ENCODE measurements at regions of chr14 and their contacts with region 1.

Region 1: DNA sequence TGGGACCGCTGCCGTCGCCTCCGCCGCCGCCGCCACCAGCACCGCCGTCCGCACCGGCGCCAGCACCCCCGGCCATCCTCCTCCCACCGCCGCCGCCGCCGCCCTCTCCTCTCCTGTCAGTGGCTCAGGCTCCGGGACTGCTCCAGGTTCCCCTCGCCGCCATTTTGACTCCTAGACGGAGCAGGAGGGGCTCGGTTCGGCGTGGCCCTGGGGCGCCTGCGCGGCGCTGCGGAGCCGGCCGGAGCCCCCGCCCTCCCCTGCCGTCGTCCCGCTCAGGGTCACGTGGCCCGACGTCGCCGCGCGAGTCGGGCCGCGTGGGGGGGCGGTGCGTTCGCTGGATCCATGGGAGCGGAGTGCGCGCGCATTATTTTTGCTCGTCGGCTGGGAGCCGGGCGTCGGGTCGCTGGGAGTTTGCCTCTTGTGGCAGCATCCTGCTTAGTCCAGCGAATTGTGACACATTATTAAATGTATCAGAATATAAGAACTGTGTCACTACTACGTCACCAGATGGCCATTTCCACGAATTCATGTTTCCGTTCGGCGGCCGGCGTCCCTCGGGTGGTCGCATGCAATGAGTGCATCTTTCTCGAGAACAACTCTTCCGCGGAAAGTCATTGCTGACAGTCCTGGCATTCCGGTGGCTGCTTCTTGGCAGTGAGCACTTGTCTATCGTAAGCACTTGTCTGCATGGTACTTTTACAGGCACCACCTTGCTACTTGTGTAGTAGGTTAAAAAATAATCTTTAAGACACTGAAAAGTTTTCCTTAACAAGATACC is at the start of gene BTBD7:
- DNase-seq: peak; percentile 96
- H3K4me3 Mint-ChIP-seq: peak within 1 kb of the TSS; percentile 76
- H3K27ac Mint-ChIP-seq: peak within 1 kb of the TSS; percentile 97
- H3K4me1 Mint-ChIP-seq: peaks cover 22% of the 10 kb centered on the region
- H3K27me3 Mint-ChIP-seq: no peaks in the 10 kb centered on the region
- CTCF ChIP-seq: no peak
- total RNA-seq, gene BTBD7: 39.3 and 42.0 TPM in 2 replicates

Region 2: GRCh38 chr14:93042968-93043940 is 289.8 kb before region 1 on chr14:
- CTCF ChIA-PET with region 1: no interaction called
- intact Hi-C with region 1: loop called (anchors 5 kb)
- DNase-seq: peak; percentile 96
- H3K4me3 Mint-ChIP-seq: peak overlapping the region; percentile 50
- H3K27ac Mint-ChIP-seq: peak overlapping the region; percentile 88
- H3K4me1 Mint-ChIP-seq: peaks cover 87% of the 10 kb centered on the region
- H3K27me3 Mint-ChIP-seq: no peaks in the 10 kb centered on the region
- CTCF ChIP-seq: no peak

Region 3: DNA sequence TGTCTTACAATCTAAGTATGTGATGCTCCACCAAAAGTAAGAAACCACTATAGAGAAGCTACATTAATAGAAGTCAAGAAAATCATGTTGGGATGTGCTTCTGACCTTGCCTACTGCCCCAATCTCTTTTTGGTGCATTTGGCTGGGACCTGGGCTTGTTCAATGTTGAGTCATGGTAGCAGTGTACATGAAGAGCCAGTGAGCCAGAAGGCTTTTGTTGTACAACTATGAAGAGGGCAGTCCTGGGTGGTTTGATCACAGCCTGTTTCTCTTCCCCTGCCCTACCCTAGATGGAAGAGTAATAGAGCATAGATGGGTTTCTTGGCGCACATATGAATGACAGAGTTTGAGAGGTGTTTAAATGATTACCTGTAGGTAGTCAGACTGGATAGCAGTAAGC is 69.6 kb before region 1 on chr14:
- CTCF ChIA-PET with region 1: no interaction called
- intact Hi-C with region 1: loop called (anchors 2 kb)
- DNase-seq: no peak
- H3K4me3 Mint-ChIP-seq: no peak overlapping the region
- H3K27ac Mint-ChIP-seq: no peak overlapping the region
- H3K4me1 Mint-ChIP-seq: peaks cover 37% of the 10 kb centered on the region
- H3K27me3 Mint-ChIP-seq: no peaks in the 10 kb centered on the region
- CTCF ChIP-seq: no peak

Region 4: DNA sequence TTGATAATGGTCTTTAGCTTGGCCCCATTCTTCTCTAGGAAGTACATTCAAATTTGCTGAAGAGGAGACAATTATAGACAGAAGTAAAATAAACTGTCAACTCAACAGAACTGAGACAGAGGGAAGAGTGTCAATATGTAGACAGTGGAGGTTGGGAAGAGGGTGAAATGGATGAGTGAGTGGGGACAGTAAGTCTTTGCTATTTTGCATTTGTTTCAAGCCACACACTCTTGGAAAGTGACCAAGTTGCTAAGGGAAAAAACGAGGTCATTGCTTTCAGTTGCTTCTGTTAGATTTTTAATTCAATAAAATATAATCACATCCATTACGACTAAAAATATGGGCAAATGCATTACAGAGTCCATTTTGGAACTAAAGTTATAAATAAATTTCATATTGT is 48.0 kb before region 1 on chr14:
- CTCF ChIA-PET with region 1: no interaction called
- intact Hi-C with region 1: loop called (anchors 5 kb)
- DNase-seq: no peak
- H3K4me3 Mint-ChIP-seq: no peak overlapping the region
- H3K27ac Mint-ChIP-seq: no peak overlapping the region
- H3K4me1 Mint-ChIP-seq: peaks cover 51% of the 10 kb centered on the region
- H3K27me3 Mint-ChIP-seq: no peaks in the 10 kb centered on the region
- CTCF ChIP-seq: no peak

Region 5: DNA sequence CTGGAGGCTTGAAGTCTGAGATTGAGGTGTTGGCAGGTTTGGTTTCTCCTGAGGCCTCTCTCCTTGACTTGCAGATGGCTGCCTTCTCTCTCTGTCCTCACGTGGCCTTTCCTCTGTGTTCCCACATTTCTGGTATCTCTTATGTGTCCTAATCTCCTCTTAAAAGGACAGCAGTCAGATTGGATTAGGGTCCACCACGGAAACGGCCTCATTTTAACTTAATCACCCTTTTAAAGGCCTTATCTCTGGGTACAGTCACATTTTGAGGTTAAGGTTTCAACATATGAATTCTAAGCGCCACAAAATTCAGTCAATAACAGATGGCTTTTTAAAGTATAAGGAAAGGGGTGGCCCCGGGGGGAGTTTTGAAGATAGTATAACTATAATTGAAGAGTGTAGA is 131.2 kb after region 1 on chr14:
- CTCF ChIA-PET with region 1: no interaction called
- intact Hi-C with region 1: no loop called
- DNase-seq: no peak
- H3K4me3 Mint-ChIP-seq: no peak overlapping the region
- H3K27ac Mint-ChIP-seq: no peak overlapping the region
- H3K4me1 Mint-ChIP-seq: no peaks in the 10 kb centered on the region
- H3K27me3 Mint-ChIP-seq: peaks cover 20% of the 10 kb centered on the region
- CTCF ChIP-seq: no peak